Left ventricle myocardium superior (tissue), 1 donor: ENCODE measurements at regions of chr3 and their contacts with region 1.

Region 1: GRCh38 chr3:123652346-123652984 is 67.6 kb upstream of the HACD2 start:
- DNase-seq: peak; percentile 88
- ATAC-seq: peak; percentile 94

Region 2: DNA sequence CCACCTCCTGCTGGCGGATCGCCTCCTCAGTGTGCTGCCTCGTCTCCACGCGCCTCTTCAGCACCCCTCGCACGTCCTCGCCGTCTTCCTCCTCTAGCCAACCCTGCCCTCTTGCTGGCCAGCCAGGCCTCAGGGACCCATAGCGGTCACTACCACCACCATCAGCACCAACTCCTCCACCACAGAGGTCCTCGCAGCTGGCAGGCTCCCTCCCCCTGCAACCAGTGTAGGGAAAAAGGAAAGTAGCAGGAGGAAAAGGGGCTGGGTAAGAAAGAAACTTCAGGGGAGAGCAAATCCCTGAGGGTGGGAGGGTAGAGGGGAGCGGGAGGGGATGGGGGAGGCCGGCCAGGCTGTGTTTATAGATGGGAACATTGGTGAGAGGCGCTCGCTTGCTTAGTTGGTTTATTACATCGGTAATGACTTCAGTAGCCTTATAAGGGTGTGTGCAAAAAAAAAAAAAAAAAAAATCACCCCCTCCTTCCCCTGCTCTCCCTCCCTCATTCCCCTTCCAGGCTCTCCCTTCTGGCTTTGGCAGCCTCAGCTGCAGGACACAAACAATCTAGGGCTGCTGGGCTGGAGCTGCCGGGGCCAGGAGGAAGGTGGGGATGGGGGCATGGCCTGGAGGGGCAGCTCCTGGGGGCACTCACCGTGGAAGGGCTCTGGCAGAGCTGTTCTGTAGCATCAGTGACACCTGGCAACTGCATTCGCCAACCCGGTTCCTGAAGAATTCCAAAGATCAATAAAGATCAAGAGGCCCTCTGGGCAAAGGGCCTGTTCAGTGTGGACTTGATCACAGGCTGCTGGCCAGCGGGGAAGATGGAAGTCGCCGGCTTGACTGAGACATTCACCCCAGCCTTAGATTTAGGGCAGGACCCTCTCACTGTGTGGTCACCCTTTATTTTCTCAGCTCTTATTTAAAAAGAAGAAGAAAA is 48.6 kb after region 1 on chr3:
- intact Hi-C with region 1: loop called (anchors 5 kb)
- DNase-seq: no peak
- ATAC-seq: peak; percentile 46

Region 3: GRCh38 chr3:123723522-123724168 is 71.2 kb after region 1 on chr3:
- intact Hi-C with region 1: loop called (anchors 2 kb)
- DNase-seq: no peak
- ATAC-seq: peak; percentile 44